Naive thymus-derived CD4-positive, alpha-beta T cell (primary cell): ENCODE measurements at regions of chr1 and their contacts with region 1.

Region 1: DNA sequence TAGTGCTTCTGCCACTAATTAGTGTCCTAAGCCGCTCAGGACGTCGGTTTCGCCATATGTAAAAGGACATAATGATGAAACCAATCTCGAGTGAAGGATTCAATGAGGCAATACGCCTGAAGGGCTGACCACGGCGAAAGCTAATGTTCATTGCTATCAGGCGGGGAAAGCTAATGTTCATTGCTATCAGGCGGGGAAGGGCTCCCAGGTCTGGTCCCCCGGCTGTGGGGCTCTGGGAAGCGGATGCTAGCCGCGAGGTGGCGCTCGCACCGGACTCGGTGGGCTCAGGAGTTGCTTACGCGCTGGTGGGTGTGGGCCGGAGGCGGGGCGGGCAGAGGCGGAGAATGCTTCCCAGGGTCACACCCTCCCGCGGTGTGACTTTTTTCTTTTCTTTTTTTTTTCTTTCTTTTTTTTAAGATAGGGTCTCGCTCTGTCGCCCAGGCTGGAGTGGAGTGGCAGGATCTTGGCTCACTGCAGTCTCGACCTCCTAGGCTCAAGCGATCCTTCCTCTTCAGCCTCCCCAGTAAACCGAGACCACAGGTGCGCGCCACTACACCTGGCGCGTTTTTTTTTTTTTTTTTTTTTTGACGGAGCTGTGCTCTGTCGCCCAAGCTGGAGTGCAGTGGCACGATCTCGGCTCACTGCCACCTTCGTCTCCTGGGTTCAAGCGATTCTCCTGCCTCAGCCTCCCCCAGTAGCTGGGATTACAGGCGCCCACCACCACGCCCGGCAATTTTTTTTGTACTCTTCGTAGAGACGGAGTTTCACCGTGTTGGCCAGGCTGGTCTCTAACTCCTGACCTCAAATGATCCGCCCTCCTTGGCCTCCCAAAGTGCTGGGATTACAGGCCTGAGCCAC is 1.1 kb upstream of the PEAR1 start:
- DNase-seq: peak; percentile 67 to 91 (median 79)
- ATAC-seq: peak; percentile 94
- H3K4me3 ChIP-seq: peak overlapping the region; percentile 41
- H3K4me3 Mint-ChIP-seq: peak overlapping the region; percentile 68 to 84 (median 75)
- H3K27ac ChIP-seq: no peak overlapping the region
- H3K27ac Mint-ChIP-seq: no peak overlapping the region
- H3K4me1 ChIP-seq: peaks cover 0 to 8% of the 10 kb centered on the region in 2 donors
- H3K4me1 Mint-ChIP-seq: peaks cover 8 to 25% (median 18%) of the 10 kb centered on the region in 7 donors
- H3K27me3 ChIP-seq: peaks cover 8 to 11% of the 10 kb centered on the region in 2 donors
- H3K27me3 Mint-ChIP-seq: peaks cover 21 to 51% (median 43%) of the 10 kb centered on the region in 5 donors

Region 2: DNA sequence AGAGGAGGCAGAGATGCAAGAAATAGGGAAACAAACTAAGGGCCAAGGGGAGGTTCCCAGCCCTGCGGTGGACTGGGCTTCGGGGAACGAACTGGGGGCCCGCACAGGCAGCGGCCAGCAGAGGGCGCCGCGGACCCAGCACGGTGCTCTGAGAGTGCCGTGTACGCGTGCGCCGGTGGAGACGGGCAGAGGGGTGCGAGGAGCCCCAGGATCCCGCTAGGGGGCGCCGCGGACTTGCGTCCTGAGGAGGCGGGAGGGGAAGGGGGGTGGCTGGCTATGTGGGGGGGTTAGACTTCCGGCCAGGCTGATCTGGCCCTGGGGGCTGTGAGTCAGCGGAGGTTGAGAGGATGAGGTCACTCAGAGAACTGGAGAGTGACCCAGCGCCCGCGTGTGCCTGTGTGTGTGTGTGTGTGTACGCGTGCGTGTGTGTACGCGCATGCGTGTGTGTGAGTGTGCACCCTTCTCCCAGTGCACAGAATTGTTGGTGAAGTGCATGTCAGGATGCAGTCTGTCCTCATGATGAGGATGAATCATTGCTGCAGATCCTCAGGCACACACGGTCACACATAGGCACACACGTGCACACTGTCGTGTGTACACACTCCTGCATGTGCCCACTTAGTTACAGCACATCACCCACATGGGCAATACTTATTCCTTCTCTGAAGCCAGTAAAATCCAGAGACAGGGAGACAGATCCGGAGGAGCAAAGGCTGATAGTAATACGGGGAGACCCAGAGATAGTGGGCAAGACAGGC is 232.2 kb before region 1 on chr1:
- CTCF ChIA-PET with region 1: no interaction called
- POLR2A ChIA-PET with region 1: no interaction called
- intact Hi-C with region 1: loop called in 1 of 2 experiments (anchors 1 kb)
- DNase-seq: peak; percentile 82 to 96 (median 89)
- ATAC-seq: peak; percentile 95
- H3K4me3 ChIP-seq: no peak overlapping the region
- H3K4me3 Mint-ChIP-seq: peak overlapping the region in 9 of 10 donors; percentile 4 to 90 (median 48)
- H3K27ac ChIP-seq: no peak overlapping the region
- H3K27ac Mint-ChIP-seq: peak overlapping the region in 8 of 9 donors; percentile 53 to 87 (median 69)
- H3K4me1 ChIP-seq: peaks cover 32 to 39% of the 10 kb centered on the region in 2 donors
- H3K4me1 Mint-ChIP-seq: peaks cover 33 to 62% (median 44%) of the 10 kb centered on the region in 7 donors
- H3K27me3 ChIP-seq: peaks cover 0 to 13% of the 10 kb centered on the region in 2 donors
- H3K27me3 Mint-ChIP-seq: peaks cover 18 to 30% (median 24%) of the 10 kb centered on the region in 5 donors

Region 3: DNA sequence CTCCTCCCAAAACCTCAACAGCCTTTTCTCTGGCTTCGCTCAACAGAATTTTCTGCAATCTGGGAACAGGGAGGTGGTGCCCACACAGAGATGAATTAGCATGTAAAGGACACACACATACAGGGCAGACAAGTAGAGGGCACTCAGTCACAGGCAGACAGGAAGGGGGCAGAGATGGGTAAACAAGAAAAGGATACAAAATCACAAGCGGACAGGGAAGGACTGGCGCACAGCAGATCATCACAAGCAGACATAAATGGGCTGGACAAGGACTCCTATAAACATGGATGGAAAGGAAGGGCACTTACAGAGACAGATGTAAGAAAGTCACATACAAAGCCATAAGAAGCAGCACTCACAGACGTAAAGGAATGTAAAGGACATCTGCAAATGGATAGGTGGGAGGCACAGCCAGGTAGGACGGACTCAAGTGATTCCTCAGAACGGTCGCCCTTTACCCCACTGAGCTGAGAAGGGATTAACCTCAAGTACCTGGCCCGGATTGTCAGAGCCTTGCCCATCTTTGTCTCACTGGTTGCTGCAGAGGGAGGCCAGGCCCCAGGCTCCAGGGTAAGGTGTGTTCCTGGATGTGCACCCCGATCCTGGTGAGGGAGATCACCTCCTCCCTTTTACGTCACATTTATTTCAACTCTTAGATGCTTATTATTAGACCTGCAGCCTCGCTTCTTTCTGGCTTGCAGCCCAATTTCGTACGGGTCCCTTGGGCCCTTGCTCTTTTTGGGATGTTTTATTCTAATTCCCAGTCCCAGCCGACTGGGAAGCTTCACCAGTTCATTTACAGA is 125.9 kb before region 1 on chr1:
- CTCF ChIA-PET with region 1: no interaction called
- POLR2A ChIA-PET with region 1: no interaction called
- intact Hi-C with region 1: no loop called
- DNase-seq: peak in 1 of 9 donors; percentile 22
- ATAC-seq: no peak
- H3K4me3 ChIP-seq: peak overlapping the region; percentile 58
- H3K4me3 Mint-ChIP-seq: no peak overlapping the region
- H3K27ac ChIP-seq: peak overlapping the region; percentile 98
- H3K27ac Mint-ChIP-seq: peak overlapping the region in 2 of 9 donors; percentile 13 to 51
- H3K4me1 ChIP-seq: peaks cover 19 to 36% of the 10 kb centered on the region in 2 donors
- H3K4me1 Mint-ChIP-seq: peaks cover 30 to 39% (median 36%) of the 10 kb centered on the region in 7 donors
- H3K27me3 ChIP-seq: no peaks in the 10 kb centered on the region
- H3K27me3 Mint-ChIP-seq: no peaks in the 10 kb centered on the region

Region 4: GRCh38 chr1:156797212-156797871 is 95.1 kb before region 1 on chr1:
- CTCF ChIA-PET with region 1: interaction called, 38 read pairs
- POLR2A ChIA-PET with region 1: no interaction called
- intact Hi-C with region 1: loop called (anchors 1 kb)
- DNase-seq: peak in 8 of 9 donors; percentile 47 to 76 (median 66)
- ATAC-seq: peak; percentile 89
- H3K4me3 ChIP-seq: no peak overlapping the region
- H3K4me3 Mint-ChIP-seq: no peak overlapping the region
- H3K27ac ChIP-seq: no peak overlapping the region
- H3K27ac Mint-ChIP-seq: peak overlapping the region in 5 of 9 donors; percentile 0 to 49 (median 18)
- H3K4me1 ChIP-seq: no peaks in the 10 kb centered on the region
- H3K4me1 Mint-ChIP-seq: peaks cover 0 to 24% (median 8%) of the 10 kb centered on the region in 7 donors
- H3K27me3 ChIP-seq: no peaks in the 10 kb centered on the region
- H3K27me3 Mint-ChIP-seq: no peaks in the 10 kb centered on the region

Region 5: DNA sequence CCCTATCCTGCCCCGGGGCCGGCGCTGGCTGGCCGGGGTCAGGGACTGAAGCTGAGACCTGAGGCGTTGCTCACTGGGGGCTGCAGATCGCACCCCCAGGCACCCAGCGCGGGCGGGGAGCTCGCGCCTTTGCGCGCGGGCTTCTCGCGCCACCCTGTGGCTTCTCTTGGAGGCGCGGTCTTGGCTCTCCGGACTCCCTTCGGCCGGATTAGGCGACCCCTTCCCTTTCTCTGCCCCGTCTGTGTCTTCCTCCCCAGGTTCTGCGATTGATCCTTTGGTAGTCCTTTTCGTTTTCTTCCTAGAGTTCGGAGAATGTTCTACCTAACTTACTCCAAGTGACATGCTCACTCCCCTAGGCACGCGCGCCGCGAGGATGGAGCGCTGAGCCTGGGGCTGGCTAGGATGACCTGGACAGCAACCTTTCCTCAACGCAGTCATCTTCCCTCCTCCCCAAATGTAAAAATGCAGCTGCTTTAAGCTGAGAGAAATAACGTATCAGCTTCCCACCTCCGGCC is 32.2 kb before region 1 on chr1:
- CTCF ChIA-PET with region 1: no interaction called
- POLR2A ChIA-PET with region 1: no interaction called
- intact Hi-C with region 1: loop called (anchors 1 kb)
- DNase-seq: peak; percentile 21 to 77 (median 45)
- ATAC-seq: peak; percentile 71
- H3K4me3 ChIP-seq: peak overlapping the region; percentile 68
- H3K4me3 Mint-ChIP-seq: peak overlapping the region; percentile 70 to 92 (median 83)
- H3K27ac ChIP-seq: no peak overlapping the region
- H3K27ac Mint-ChIP-seq: peak overlapping the region in 5 of 9 donors; percentile 13 to 73 (median 59)
- H3K4me1 ChIP-seq: peaks cover 5 to 20% of the 10 kb centered on the region in 2 donors
- H3K4me1 Mint-ChIP-seq: peaks cover 17 to 64% (median 24%) of the 10 kb centered on the region in 7 donors
- H3K27me3 ChIP-seq: peaks cover 12 to 31% of the 10 kb centered on the region in 2 donors
- H3K27me3 Mint-ChIP-seq: peaks cover 43 to 53% (median 51%) of the 10 kb centered on the region in 5 donors

Region 6: GRCh38 chr1:156927215-156928042 is 35.0 kb after region 1 on chr1:
- CTCF ChIA-PET with region 1: interaction called, 16 read pairs
- POLR2A ChIA-PET with region 1: interaction called, 3 read pairs
- intact Hi-C with region 1: loop called (anchors 1 kb)
- DNase-seq: peak; percentile 42 to 72 (median 59)
- ATAC-seq: peak; percentile 76
- H3K4me3 ChIP-seq: no peak overlapping the region
- H3K4me3 Mint-ChIP-seq: peak overlapping the region; percentile 13 to 83 (median 65)
- H3K27ac ChIP-seq: no peak overlapping the region
- H3K27ac Mint-ChIP-seq: peak overlapping the region in 2 of 9 donors; percentile 29 to 59
- H3K4me1 ChIP-seq: peaks cover 0 to 8% of the 10 kb centered on the region in 2 donors
- H3K4me1 Mint-ChIP-seq: peaks cover 18 to 35% (median 31%) of the 10 kb centered on the region in 7 donors
- H3K27me3 ChIP-seq: peaks cover 16 to 27% of the 10 kb centered on the region in 2 donors
- H3K27me3 Mint-ChIP-seq: peaks cover 72 to 91% (median 81%) of the 10 kb centered on the region in 5 donors

Region 7: GRCh38 chr1:156970017-156970416 is 77.6 kb after region 1 on chr1:
- CTCF ChIA-PET with region 1: interaction called, 14 read pairs
- POLR2A ChIA-PET with region 1: interaction called, 3 read pairs
- intact Hi-C with region 1: loop called in 1 of 2 experiments (anchors 1 kb)
- DNase-seq: peak in 5 of 9 donors; percentile 14 to 27 (median 22)
- ATAC-seq: no peak
- H3K4me3 ChIP-seq: no peak overlapping the region
- H3K4me3 Mint-ChIP-seq: no peak overlapping the region
- H3K27ac ChIP-seq: no peak overlapping the region
- H3K27ac Mint-ChIP-seq: peak overlapping the region in 1 of 9 donors; percentile 12
- H3K4me1 ChIP-seq: no peaks in the 10 kb centered on the region
- H3K4me1 Mint-ChIP-seq: peaks cover 0 to 8% (median 0%) of the 10 kb centered on the region in 7 donors
- H3K27me3 ChIP-seq: no peaks in the 10 kb centered on the region
- H3K27me3 Mint-ChIP-seq: peaks cover 0 to 75% (median 4%) of the 10 kb centered on the region in 5 donors